ENCODE measurements at regions of chr9 and their contacts with region 1.

Region 1: GRCh38 chr9:98998441-98999151 is 54.9 kb downstream of the COL15A1 start:
- DNase-seq: peak; percentile 67
- ATAC-seq: peak; percentile 84
- H3K4me3 ChIP-seq: no peak overlapping the region
- H3K27ac ChIP-seq: no peak overlapping the region
- H3K4me1 ChIP-seq: no peaks in the 10 kb centered on the region
- H3K27me3 ChIP-seq: no peaks in the 10 kb centered on the region
- CTCF ChIP-seq: peak; percentile 80

Region 2: GRCh38 chr9:98807070-98807810 is 191.4 kb before region 1 on chr9 and contains the start of gene GALNT12:
- CTCF ChIA-PET with region 1: no interaction called
- POLR2A ChIA-PET with region 1: no interaction called
- intact Hi-C with region 1: loop called (anchors 2 kb)
- DNase-seq: no peak
- ATAC-seq: peak; percentile 20
- H3K4me3 ChIP-seq: peak within 1 kb of the TSS; percentile 87
- H3K27ac ChIP-seq: peak within 1 kb of the TSS; percentile 80
- H3K4me1 ChIP-seq: peaks cover 56% of the 10 kb centered on the region
- H3K27me3 ChIP-seq: no peaks in the 10 kb centered on the region
- CTCF ChIP-seq: no peak
- total RNA-seq, gene GALNT12: 14.8 and 24.8 TPM in 2 replicates

Region 3: DNA sequence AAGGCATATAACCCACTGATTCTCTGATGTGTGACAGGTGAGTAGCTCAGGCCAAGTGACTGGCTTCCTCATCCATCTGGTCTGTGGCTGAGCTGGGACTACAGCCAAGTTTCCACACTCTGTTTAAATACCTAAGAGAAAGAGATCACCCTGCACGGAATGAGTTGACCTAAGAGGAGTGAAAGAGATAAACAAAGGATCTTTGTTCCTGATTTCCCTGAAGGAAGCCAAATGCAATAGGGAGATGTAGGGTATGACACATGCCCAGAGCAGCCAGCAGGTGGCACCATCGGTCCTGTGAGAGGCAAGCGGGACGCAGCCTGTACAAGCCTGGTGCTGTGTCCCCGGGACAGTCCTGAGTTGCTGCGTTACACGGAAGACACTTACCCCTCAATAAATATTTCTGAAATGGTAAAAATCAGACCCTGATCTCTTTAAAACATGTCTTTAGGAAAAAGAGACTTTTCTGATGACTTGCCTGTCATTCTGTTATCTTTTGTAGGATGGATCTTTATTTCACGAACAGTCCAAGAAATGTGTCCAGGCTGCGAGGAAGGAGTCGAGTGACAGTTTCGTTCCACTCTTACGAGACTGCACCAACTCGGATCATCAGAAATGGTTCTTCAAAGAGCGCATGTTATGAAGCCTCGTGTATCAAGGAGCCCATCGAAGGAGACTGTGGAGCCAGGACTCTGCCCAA is 150.0 kb before region 1 on chr9:
- CTCF ChIA-PET with region 1: no interaction called
- POLR2A ChIA-PET with region 1: no interaction called
- intact Hi-C with region 1: loop called (anchors 1 kb)
- DNase-seq: peak; percentile 96
- ATAC-seq: peak; percentile 96
- H3K4me3 ChIP-seq: no peak overlapping the region
- H3K27ac ChIP-seq: peak overlapping the region; percentile 81
- H3K4me1 ChIP-seq: peaks cover 26% of the 10 kb centered on the region
- H3K27me3 ChIP-seq: no peaks in the 10 kb centered on the region
- CTCF ChIP-seq: peak; percentile 83

Region 4: DNA sequence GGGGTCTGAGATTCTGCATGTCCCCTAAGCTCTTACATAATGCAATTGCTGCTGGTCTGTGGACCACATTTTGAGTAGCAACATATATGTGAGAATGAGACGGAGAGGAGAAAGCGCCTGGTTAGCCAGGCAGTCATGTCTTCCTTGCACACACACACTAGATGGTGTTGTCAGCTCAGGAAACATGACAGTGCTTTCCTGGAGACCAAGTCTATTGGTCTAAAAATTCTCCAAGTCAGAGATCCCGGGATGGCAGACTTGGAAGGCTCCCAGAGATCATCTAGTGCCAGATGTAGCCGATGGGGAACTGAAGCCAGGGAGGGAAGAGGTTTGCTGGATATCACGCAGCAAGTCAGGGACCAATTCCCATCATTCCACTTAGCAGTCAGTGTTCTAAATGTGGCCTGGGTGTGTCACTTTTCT is 137.7 kb before region 1 on chr9:
- CTCF ChIA-PET with region 1: interaction called, 11 read pairs
- POLR2A ChIA-PET with region 1: no interaction called
- intact Hi-C with region 1: loop called (anchors 1 kb)
- DNase-seq: peak; percentile 70
- ATAC-seq: peak; percentile 54
- H3K4me3 ChIP-seq: no peak overlapping the region
- H3K27ac ChIP-seq: peak overlapping the region; percentile 97
- H3K4me1 ChIP-seq: peaks cover 25% of the 10 kb centered on the region
- H3K27me3 ChIP-seq: no peaks in the 10 kb centered on the region
- CTCF ChIP-seq: peak; percentile 57

Region 5: GRCh38 chr9:98866448-98867102 is 132.0 kb before region 1 on chr9:
- CTCF ChIA-PET with region 1: interaction called, 11 read pairs
- POLR2A ChIA-PET with region 1: no interaction called
- intact Hi-C with region 1: no loop called
- DNase-seq: peak; percentile 86
- ATAC-seq: peak; percentile 48
- H3K4me3 ChIP-seq: no peak overlapping the region
- H3K27ac ChIP-seq: peak overlapping the region; percentile 66
- H3K4me1 ChIP-seq: peaks cover 39% of the 10 kb centered on the region
- H3K27me3 ChIP-seq: no peaks in the 10 kb centered on the region
- CTCF ChIP-seq: no peak

Region 6: DNA sequence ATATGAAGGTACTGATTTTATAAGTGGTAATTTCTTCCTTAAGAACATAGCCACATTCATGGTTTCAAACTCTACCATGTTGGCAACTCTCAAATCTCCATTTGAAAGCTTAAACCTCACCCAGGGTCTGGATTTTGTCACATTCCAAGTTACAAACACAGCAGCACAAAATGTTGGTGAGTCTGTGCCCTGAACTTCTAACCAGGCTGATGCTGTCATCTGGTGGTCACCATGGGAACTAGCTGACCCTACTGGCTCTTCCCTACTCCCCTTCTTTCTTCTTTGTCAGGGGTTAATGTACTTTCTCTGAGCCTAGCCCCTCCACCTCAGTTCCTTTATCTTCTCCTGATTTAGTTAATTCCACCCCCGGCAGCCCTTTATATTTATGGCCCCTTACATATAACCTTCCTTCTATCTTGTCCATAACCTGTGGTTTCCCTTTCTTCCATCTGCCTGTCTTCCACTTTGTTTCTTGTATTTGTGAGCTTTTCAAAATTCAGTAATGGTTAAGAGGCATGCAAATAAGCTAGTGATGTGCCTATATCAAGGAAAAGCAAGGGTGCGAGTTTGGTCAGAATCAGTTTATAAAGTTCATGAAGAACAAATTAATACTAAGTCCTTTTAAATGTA is 142.2 kb after region 1 on chr9:
- CTCF ChIA-PET with region 1: no interaction called
- POLR2A ChIA-PET with region 1: no interaction called
- intact Hi-C with region 1: loop called (anchors 1 kb)
- DNase-seq: peak; percentile 51
- ATAC-seq: peak; percentile 65
- H3K4me3 ChIP-seq: no peak overlapping the region
- H3K27ac ChIP-seq: no peak overlapping the region
- H3K4me1 ChIP-seq: peaks cover 20% of the 10 kb centered on the region
- H3K27me3 ChIP-seq: no peaks in the 10 kb centered on the region
- CTCF ChIP-seq: peak; percentile 77

Measured in PC-3 (cell line).